Heart left ventricle (tissue), 16 donors: ENCODE measurements at regions of chr15 and their contacts with region 1.

Region 1: DNA sequence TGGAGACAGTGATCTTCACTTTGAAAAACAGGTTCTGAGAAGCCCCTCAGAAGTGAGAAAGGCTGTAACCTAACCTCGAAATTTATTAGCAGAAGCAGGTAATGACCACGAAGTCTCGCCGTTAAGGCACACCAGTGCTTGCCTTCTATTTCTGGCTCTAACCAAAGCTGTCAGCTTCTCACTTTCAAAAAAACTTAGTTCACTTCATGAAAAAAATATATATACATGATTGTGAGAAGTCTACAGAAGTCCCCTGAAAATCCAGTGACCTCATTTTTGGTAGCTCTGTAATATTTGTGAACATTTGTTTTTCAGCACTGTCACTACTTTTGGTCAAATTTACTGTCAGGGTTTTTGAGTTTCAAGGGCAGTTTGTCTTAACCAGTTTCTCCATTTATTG is 19.1 kb upstream of the AKAP13 start:
- DNase-seq: no peak
- ATAC-seq: no peak
- H3K4me3 ChIP-seq: no peak overlapping the region
- H3K27ac ChIP-seq: peak overlapping the region; percentile 41 to 93 (median 80)
- H3K4me1 ChIP-seq: peaks cover 0 to 45% (median 19%) of the 10 kb centered on the region in 12 donors
- H3K27me3 ChIP-seq: no peaks in the 10 kb centered on the region
- CTCF ChIP-seq: no peak
- POLR2A ChIP-seq: no peak

Region 2: DNA sequence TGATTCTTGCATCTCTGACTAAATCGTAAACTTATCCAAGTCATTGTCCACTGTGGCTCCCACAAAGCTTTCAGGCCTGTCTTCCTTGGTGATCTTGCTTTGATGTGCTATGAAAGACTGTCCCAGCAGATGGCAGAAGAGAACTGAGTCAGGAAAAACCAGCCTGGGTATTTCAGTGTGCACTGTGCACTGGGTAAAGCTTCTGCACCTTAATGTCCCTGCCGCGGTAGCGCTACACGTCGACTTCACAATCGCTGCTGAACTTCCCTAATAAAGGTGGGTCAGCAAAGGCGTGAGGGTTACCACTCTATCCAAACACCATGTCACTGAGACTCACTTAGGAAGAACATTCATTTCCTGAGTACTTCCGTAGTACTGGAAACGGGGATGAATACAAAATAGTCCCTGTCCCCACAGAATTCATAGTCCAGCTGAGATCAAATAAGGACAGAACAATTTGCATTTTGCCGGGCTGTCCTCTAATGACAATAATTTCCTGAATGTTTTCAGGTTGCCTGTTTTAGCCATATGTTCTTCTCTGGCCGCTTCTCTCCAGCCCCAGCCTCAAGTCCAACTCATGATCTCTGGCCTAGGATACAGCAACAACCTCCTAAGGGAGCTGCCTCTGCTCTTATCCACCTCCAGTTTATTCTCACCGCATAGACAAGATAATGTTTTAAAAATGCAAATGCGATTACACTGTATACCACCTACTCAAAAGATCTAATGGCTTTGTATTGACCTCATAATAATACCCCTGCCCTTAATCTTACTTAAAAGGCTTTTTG is 64.5 kb before region 1 on chr15:
- intact Hi-C with region 1: no loop called
- DNase-seq: peak in 4 of 5 donors; percentile 57 to 70 (median 63)
- ATAC-seq: peak; percentile 87 to 94 (median 94)
- H3K4me3 ChIP-seq: peak overlapping the region in 9 of 12 donors; percentile 28 to 53 (median 45)
- H3K27ac ChIP-seq: peak overlapping the region in 8 of 12 donors; percentile 9 to 57 (median 41)
- H3K4me1 ChIP-seq: peaks cover 0 to 14% (median 7%) of the 10 kb centered on the region in 12 donors
- H3K27me3 ChIP-seq: no peaks in the 10 kb centered on the region
- CTCF ChIP-seq: peak; percentile 53 to 81 (median 72)
- POLR2A ChIP-seq: no peak

Region 3: GRCh38 chr15:85324202-85324601 is 37.1 kb before region 1 on chr15:
- intact Hi-C with region 1: no loop called
- DNase-seq: no peak
- ATAC-seq: no peak
- H3K4me3 ChIP-seq: no peak overlapping the region
- H3K27ac ChIP-seq: no peak overlapping the region
- H3K4me1 ChIP-seq: peaks cover 0 to 14% (median 3%) of the 10 kb centered on the region in 12 donors
- H3K27me3 ChIP-seq: no peaks in the 10 kb centered on the region
- CTCF ChIP-seq: no peak
- POLR2A ChIP-seq: no peak

Region 4: GRCh38 chr15:85337425-85338074 is 23.8 kb before region 1 on chr15:
- intact Hi-C with region 1: loop called in 1 of 10 experiments (anchors 2 kb)
- DNase-seq: peak in 3 of 5 donors; percentile 30 to 44 (median 42)
- ATAC-seq: peak in 3 of 4 donors; percentile 36 to 71 (median 48)
- H3K4me3 ChIP-seq: peak overlapping the region in 2 of 12 donors; percentile 9 to 20
- H3K27ac ChIP-seq: peak overlapping the region; percentile 63 to 97 (median 86)
- H3K4me1 ChIP-seq: peaks cover 2 to 53% (median 27%) of the 10 kb centered on the region in 12 donors
- H3K27me3 ChIP-seq: no peaks in the 10 kb centered on the region
- CTCF ChIP-seq: no peak
- POLR2A ChIP-seq: no peak

Region 5: GRCh38 chr15:85402195-85402881 is 41.0 kb after region 1 on chr15:
- intact Hi-C with region 1: no loop called
- DNase-seq: no peak
- ATAC-seq: peak in 3 of 4 donors; percentile 24 to 30 (median 29)
- H3K4me3 ChIP-seq: peak overlapping the region in 2 of 12 donors; percentile 2 to 9
- H3K27ac ChIP-seq: peak overlapping the region in 10 of 12 donors; percentile 1 to 56 (median 27)
- H3K4me1 ChIP-seq: peaks cover 0 to 92% (median 72%) of the 10 kb centered on the region in 12 donors
- H3K27me3 ChIP-seq: no peaks in the 10 kb centered on the region
- CTCF ChIP-seq: no peak
- POLR2A ChIP-seq: no peak

Region 6: DNA sequence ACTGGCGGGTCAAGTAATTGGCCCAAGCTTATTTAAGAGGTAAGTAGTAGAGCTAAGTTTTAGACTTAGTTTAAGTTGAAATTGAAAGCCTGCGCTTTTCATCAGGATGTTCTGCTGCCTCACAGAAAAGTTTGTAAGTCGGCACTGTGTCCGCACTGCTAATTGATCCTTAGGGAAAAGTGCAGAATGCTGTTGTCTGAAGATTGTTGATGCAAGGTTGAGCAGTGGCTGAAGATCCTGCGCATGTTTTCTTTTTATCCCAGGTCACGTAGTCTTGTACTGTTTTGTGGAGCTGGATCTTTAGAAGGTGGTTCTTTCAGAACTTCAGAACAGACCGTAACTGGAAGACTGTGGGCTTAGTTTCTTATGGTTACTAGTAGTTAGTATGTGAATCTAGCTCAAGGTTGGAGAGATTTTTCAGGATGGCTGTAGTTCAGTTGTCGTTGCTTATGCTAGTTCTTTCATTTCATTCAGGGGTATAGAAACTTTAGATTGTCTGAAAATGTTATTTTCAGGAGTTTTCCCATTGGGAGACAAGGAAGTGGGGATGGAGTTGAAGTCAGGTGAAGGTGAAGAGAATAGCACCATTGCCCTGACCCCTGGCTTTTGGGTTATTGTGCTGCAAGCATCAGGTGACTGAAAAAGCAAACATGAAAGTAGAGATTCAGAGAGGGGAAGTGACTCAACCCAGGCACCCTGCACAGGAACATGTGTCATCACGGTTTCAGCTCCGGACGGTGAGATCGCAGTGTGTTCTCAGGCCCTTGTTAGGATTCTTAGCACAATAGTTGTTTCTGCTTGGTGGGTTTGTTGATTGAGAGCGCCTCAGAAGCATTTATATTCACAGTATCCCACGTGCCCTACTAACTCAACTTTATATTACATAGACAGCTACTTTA is 51.9 kb after region 1 on chr15:
- intact Hi-C with region 1: loop called in 1 of 10 experiments (anchors 10 kb)
- DNase-seq: peak in 4 of 5 donors; percentile 44 to 74 (median 48)
- ATAC-seq: peak; percentile 74 to 91 (median 88)
- H3K4me3 ChIP-seq: peak overlapping the region in 9 of 12 donors; percentile 0 to 31 (median 17)
- H3K27ac ChIP-seq: peak overlapping the region in 11 of 12 donors; percentile 7 to 80 (median 60)
- H3K4me1 ChIP-seq: peaks cover 7 to 77% (median 50%) of the 10 kb centered on the region in 12 donors
- H3K27me3 ChIP-seq: no peaks in the 10 kb centered on the region
- CTCF ChIP-seq: peak in 2 of 12 donors; percentile 14 to 24
- POLR2A ChIP-seq: no peak